Caco-2 (cell line): ENCODE measurements at regions of chr11 and their contacts with region 1.

Region 1: DNA sequence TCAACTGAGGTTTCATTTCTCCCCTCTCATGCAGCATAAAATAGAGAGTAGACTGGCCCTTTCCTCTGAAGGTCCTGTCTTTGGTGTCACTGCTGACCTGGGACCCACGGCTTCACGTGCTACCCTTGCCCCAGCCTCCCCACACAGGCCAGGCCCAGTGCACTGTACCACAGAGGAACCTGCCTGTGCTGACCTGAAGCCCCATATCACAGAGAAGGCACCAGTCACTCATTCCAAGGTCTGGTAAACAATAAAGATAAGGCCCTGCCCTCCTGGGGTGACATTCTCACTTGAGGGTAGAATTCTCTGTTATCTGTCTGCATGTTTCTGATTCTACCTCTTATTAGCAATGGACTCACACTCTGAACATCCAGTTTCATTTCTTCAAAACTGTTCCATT is 51.3 kb downstream of the RPL27A start:
- DNase-seq: peak; percentile 52 to 68
- H3K4me3 ChIP-seq: no peak overlapping the region
- H3K4me3 Mint-ChIP-seq: no peak overlapping the region
- H3K27ac Mint-ChIP-seq: peak overlapping the region; percentile 86
- H3K4me1 ChIP-seq: peaks cover 31% of the 10 kb centered on the region
- H3K4me1 Mint-ChIP-seq: peaks cover 7% of the 10 kb centered on the region
- H3K27me3 ChIP-seq: no peaks in the 10 kb centered on the region
- H3K27me3 Mint-ChIP-seq: no peaks in the 10 kb centered on the region
- CTCF ChIP-seq: no peak

Region 2: GRCh38 chr11:8754241-8754640 is 20.4 kb after region 1 on chr11:
- CTCF ChIA-PET with region 1: no interaction called
- POLR2A ChIA-PET with region 1: no interaction called
- intact Hi-C with region 1: loop called (anchors 2 kb)
- DNase-seq: no peak
- H3K4me3 ChIP-seq: no peak overlapping the region
- H3K4me3 Mint-ChIP-seq: no peak overlapping the region
- H3K27ac Mint-ChIP-seq: no peak overlapping the region
- H3K4me1 ChIP-seq: peaks cover 33% of the 10 kb centered on the region
- H3K4me1 Mint-ChIP-seq: peaks cover 17% of the 10 kb centered on the region
- H3K27me3 ChIP-seq: no peaks in the 10 kb centered on the region
- H3K27me3 Mint-ChIP-seq: no peaks in the 10 kb centered on the region
- CTCF ChIP-seq: no peak